HCT116 (cell line): ENCODE measurements at regions of chr19 and their contacts with region 1.

Region 1: GRCh38 chr19:42396381-42397262 is 6.5 kb upstream of the CNFN start:
- DNase-seq: peak; percentile 98
- ATAC-seq: peak; percentile 95
- H3K4me3 ChIP-seq: peak overlapping the region; percentile 88 to 90
- H3K27ac ChIP-seq: peak overlapping the region; percentile 82
- H3K4me1 ChIP-seq: peaks cover 10 to 39% of the 10 kb centered on the region in 2 experiments
- H3K27me3 ChIP-seq: no peaks in the 10 kb centered on the region
- CTCF ChIP-seq: no peak
- POLR2A ChIP-seq: peak; percentile 94
- RAD21 ChIP-seq: no peak

Region 2: DNA sequence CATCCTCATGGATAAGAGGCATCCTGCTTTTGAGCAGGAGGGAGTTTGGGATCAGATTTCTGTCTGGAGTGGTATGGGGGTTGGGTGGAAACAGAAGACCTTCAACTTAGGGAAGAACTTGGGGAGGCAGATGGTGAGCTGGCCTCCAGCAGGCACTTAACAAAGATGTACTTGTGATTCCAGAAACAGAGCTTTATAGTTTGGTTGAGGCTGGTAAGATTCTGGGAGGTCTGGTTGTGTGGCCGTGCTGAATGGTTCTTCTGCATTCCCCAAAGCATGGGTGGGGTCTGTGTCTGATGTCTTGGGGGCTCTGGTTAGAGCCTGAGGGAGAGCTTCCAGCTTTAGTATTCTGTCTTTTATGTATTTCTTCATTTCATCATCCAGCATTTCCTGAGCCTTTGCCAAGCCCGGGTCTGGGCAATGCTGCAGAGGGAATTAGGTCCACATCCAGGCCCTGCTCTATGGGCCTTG is 66.3 kb before region 1 on chr19:
- CTCF ChIA-PET with region 1: no interaction called
- POLR2A ChIA-PET with region 1: no interaction called
- RAD21 ChIA-PET with region 1: no interaction called
- intact Hi-C with region 1: no loop called
- DNase-seq: no peak
- ATAC-seq: no peak
- H3K4me3 ChIP-seq: no peak overlapping the region
- H3K27ac ChIP-seq: no peak overlapping the region
- H3K4me1 ChIP-seq: peaks cover 10 to 13% of the 10 kb centered on the region in 2 experiments
- H3K27me3 ChIP-seq: no peaks in the 10 kb centered on the region
- CTCF ChIP-seq: no peak
- POLR2A ChIP-seq: no peak
- RAD21 ChIP-seq: no peak

Region 3: DNA sequence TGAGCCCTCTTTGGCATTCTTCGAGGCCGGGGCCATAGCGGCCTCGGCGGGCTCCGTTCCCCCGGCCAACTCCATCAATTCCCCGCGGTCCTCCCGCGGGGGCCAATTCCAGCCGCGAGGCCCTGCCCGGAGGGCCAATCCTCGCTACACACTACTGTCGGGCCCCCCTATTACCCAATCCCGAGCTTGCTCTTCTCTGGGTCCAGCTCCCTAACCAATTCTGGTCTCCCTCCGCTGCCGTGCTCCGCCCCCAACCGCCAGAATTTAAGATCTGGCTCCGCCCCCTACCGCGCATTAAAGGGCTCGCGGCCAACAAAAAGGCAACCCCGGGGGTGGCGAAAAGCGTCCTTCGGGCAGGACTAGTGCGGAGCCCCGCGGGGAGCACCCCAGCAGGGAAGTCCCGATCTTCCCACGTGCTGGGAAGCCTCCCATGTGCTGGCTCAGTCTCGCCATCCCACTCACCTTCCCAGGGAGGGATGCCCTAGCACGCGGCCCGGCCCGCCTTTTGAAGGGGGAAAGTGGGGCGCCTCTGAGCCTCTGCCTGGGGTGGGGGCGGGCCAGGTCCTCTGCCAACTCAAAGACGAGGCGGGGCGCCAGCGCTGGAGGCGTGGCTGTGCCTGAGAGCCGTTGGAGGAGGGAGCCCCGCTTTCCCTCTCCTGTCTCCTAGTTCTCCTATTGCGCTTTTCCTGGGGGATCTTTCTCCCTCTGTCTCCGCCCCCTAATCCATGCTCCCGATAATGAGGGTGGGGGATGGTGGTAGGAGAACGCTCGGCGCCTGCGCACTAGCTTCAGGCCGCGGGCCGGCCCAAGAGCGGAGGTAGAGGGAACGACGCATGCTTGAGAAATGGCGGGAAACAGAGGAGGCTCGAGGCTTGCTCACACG is 27.1 kb after region 1 on chr19:
- CTCF ChIA-PET with region 1: interaction called, 8 read pairs
- POLR2A ChIA-PET with region 1: interaction called, 10 read pairs
- RAD21 ChIA-PET with region 1: no interaction called
- intact Hi-C with region 1: no loop called
- DNase-seq: peak; percentile 84
- ATAC-seq: peak; percentile 96
- H3K4me3 ChIP-seq: peak overlapping the region; percentile 71 to 73
- H3K27ac ChIP-seq: peak overlapping the region; percentile 50
- H3K4me1 ChIP-seq: peaks cover 21 to 45% of the 10 kb centered on the region in 2 experiments; a peak in 3 of 4 replicates
- H3K27me3 ChIP-seq: no peaks in the 10 kb centered on the region
- CTCF ChIP-seq: no peak
- POLR2A ChIP-seq: no peak
- RAD21 ChIP-seq: no peak